ENCODE measurements at regions of chr12 and their contacts with region 1.

Region 1: GRCh38 chr12:12266873-12267741 is at the start of gene LRP6:
- DNase-seq: peak; percentile 94
- H3K4me3 ChIP-seq: peak within 1 kb of the TSS; percentile 64 to 88 (median 84)
- H3K27ac ChIP-seq: peak within 1 kb of the TSS; percentile 97 to 99 (median 98)
- H3K4me1 ChIP-seq: peaks cover 11 to 33% (median 25%) of the 10 kb centered on the region in 4 donors
- H3K27me3 ChIP-seq: no peaks in the 10 kb centered on the region
- CTCF ChIP-seq: peak in 1 of 3 experiments; percentile 15
- EP300 ChIP-seq: no peak
- POLR2A ChIP-seq: peak; percentile 52
- total RNA-seq, gene LRP6: 26.2 to 61.1 (median 34.8) TPM

Region 2: GRCh38 chr12:11482955-11483354 is 784.2 kb before region 1 on chr12:
- intact Hi-C with region 1: no loop called
- DNase-seq: no peak
- H3K4me3 ChIP-seq: no peak overlapping the region
- H3K27ac ChIP-seq: no peak overlapping the region
- H3K4me1 ChIP-seq: peaks cover 0 to 4% (median 0%) of the 10 kb centered on the region in 4 donors
- H3K27me3 ChIP-seq: peaks cover 0 to 6% (median 0%) of the 10 kb centered on the region in 4 donors
- CTCF ChIP-seq: no peak
- EP300 ChIP-seq: no peak
- POLR2A ChIP-seq: no peak

Region 3: DNA sequence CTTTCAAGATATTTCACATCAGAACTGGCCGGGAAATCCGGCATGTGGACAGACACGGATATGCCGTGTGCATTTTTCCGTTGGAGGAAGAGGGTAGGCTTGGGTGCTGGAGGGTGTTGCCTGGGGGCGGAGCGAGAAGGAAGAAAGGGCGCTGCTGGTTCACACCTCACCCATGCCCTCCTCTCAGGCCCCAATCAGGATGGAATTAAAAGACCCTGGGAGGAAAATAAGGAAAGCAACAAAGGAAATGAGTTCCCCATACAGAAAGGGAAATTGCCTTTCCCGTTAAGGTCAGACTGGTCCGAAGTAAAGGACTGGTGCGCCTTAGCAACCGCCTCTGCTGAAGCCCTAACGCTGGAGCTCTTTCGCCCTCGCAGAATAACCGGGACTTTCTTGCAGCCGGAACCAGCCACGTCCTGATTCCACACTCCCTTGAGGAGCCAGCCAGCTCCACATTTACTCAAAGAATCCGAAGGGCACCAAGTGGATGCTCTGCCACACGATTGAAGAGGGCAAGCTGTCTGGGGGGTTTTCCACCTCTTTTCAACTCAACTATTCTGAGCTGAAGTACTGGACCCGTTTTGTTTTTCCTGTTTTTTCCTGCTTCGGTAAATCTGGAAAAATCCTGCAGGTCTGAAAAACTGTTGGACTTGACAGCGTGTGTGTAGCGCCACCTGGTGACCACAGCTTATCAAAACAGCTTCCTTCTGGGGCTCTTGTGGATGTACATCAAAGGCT is 234.1 kb before region 1 on chr12:
- intact Hi-C with region 1: loop called (anchors 5 kb)
- DNase-seq: peak; percentile 94
- H3K4me3 ChIP-seq: peak overlapping the region; percentile 46 to 59 (median 50)
- H3K27ac ChIP-seq: peak overlapping the region; percentile 75 to 79 (median 78)
- H3K4me1 ChIP-seq: peaks cover 8 to 12% (median 10%) of the 10 kb centered on the region in 4 donors
- H3K27me3 ChIP-seq: no peaks in the 10 kb centered on the region
- CTCF ChIP-seq: peak; percentile 83 to 93 (median 90)
- EP300 ChIP-seq: no peak
- POLR2A ChIP-seq: no peak

Region 4: DNA sequence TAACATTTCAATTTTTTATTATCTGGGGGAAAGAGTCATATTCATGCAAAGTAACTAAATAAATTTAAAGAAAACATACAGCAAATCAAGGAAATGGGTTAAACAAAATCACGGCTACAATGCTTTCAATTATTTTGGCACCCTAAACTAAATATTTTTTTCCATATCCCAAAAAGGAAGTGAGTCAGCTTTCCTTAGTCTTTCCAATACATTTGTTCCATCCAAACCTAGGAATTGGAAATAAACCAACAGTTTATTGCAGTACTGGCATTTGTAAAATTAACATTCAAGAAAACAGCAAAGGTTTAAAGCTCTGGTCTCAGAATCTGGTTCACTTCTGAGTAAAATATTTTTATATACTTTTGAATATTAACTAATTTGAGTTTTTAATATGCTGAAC is 107.1 kb before region 1 on chr12:
- intact Hi-C with region 1: loop called (anchors 10 kb)
- DNase-seq: no peak
- H3K4me3 ChIP-seq: no peak overlapping the region
- H3K27ac ChIP-seq: no peak overlapping the region
- H3K4me1 ChIP-seq: peaks cover 0 to 22% (median 20%) of the 10 kb centered on the region in 4 donors
- H3K27me3 ChIP-seq: no peaks in the 10 kb centered on the region
- CTCF ChIP-seq: no peak
- EP300 ChIP-seq: no peak
- POLR2A ChIP-seq: no peak

Region 5: GRCh38 chr12:12327802-12328201 is 60.7 kb after region 1 on chr12:
- intact Hi-C with region 1: loop called (anchors 5 kb)
- DNase-seq: no peak
- H3K4me3 ChIP-seq: no peak overlapping the region
- H3K27ac ChIP-seq: no peak overlapping the region
- H3K4me1 ChIP-seq: peaks cover 0 to 5% (median 2%) of the 10 kb centered on the region in 4 donors
- H3K27me3 ChIP-seq: no peaks in the 10 kb centered on the region
- CTCF ChIP-seq: peak; percentile 58 to 70 (median 59)
- EP300 ChIP-seq: no peak
- POLR2A ChIP-seq: no peak

Region 6: DNA sequence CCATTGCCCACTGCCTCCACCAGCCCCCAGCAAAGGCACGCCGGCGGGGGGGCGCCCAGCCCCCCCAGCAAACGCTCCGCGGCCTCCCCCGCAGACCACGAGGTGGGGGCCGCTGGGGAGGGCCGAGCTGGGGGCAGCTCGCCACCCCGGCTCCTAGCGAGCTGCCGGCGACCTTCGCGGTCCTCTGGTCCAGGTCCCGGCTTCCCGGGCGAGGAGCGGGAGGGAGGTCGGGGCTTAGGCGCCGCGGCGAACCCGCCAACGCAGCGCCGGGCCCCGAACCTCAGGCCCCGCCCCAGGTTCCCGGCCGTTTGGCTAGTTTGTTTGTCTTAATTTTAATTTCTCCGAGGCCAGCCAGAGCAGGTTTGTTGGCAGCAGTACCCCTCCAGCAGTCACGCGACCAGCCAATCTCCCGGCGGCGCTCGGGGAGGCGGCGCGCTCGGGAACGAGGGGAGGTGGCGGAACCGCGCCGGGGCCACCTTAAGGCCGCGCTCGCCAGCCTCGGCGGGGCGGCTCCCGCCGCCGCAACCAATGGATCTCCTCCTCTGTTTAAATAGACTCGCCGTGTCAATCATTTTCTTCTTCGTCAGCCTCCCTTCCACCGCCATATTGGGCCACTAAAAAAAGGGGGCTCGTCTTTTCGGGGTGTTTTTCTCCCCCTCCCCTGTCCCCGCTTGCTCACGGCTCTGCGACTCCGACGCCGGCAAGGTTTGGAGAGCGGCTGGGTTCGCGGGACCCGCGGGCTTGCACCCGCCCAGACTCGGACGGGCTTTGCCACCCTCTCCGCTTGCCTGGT is 449.9 kb after region 1 on chr12 and contains the start of gene CDKN1B:
- intact Hi-C with region 1: loop called (anchors 10 kb)
- DNase-seq: peak; percentile 98
- H3K4me3 ChIP-seq: peak within 1 kb of the TSS; percentile 75 to 95 (median 86)
- H3K27ac ChIP-seq: peak within 1 kb of the TSS; percentile 98 to 100 (median 100)
- H3K4me1 ChIP-seq: peaks cover 54 to 67% (median 63%) of the 10 kb centered on the region in 4 donors
- H3K27me3 ChIP-seq: no peaks in the 10 kb centered on the region
- CTCF ChIP-seq: no peak
- EP300 ChIP-seq: no peak
- POLR2A ChIP-seq: peak; percentile 49
- total RNA-seq, gene CDKN1B: 48.7 to 97.4 (median 70.6) TPM

Measured in esophagus muscularis mucosa (tissue), 4 donors.